ENCODE measurements at regions of chr3 and their contacts with region 1.

Region 1: GRCh38 chr3:138915503-138916498 is 31.1 kb downstream of the FOXL2 start:
- DNase-seq: peak; percentile 91
- H3K4me3 Mint-ChIP-seq: peak overlapping the region; percentile 85
- H3K27ac Mint-ChIP-seq: peak overlapping the region; percentile 76
- H3K4me1 Mint-ChIP-seq: peaks cover 6% of the 10 kb centered on the region
- H3K27me3 Mint-ChIP-seq: no peaks in the 10 kb centered on the region
- CTCF ChIP-seq: peak; percentile 94

Region 2: DNA sequence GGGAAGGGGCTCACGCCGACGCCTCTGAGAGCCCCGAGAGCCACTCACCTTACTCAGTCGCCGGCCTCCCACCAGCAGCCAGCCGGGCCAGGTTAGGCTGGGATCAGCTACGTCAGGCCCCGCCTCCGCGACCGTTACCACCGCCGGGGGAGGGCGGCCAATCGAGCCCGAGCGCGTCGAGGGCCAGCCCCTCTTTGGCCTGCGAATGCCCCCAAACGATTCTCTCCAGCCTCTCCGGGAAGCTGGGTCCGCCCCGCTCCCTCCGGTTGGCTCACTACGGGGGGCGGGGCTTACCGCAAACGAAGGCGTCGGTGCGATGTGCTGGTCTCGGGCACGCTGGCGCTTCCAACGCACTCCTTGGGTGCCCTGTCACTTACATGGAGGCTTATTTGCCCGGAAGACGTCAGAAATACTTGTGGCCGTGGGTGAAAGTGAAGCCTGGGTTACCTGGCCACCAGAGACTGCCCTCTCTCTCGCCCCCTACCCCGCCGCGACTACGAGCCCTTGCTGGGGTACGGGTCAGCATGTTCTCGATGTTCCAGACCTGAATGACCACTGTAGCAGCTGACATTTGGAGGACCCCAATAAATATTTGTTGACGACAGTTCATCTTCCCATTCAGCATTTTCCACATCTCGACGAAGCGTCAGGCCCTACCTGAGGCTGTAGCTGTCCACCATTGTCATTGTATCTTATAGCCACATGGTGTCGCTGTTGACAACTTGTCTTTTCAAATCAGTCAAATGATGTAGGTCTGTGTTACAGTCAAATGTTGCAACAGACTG is 321.5 kb before region 1 on chr3 and contains the start of gene CEP70:
- CTCF ChIA-PET with region 1: interaction called, 364 read pairs
- POLR2A ChIA-PET with region 1: interaction called, 62 read pairs
- intact Hi-C with region 1: loop called (anchors 1 kb)
- DNase-seq: peak; percentile 96
- H3K4me3 Mint-ChIP-seq: peak within 1 kb of the TSS; percentile 81
- H3K27ac Mint-ChIP-seq: peak within 1 kb of the TSS; percentile 69
- H3K4me1 Mint-ChIP-seq: no peaks in the 10 kb centered on the region
- H3K27me3 Mint-ChIP-seq: no peaks in the 10 kb centered on the region
- CTCF ChIP-seq: peak; percentile 81
- total RNA-seq, gene CEP70: 21.3 and 25.9 TPM in 2 replicates

Region 3: DNA sequence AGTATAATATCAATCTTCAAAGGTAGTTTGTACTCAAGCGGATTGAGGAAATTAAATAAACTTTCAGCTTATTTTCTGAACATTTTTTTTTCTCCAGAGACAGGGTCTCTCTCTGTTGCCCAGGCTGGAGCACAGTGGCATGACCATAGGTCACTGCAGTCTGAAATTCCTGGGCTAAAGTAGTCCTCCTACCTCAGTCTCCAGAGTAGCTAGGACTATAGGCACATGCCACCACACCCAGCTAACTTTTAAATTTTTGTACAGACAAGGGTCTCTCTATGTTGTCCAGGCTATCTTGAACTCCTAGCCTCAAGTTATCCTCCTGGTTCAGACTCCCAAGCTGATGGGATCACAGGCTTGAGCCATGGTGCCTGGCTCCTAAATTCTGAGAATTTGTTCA is 210.1 kb before region 1 on chr3:
- CTCF ChIA-PET with region 1: interaction called, 78 read pairs
- POLR2A ChIA-PET with region 1: interaction called, 3 read pairs
- intact Hi-C with region 1: no loop called
- DNase-seq: no peak
- H3K4me3 Mint-ChIP-seq: no peak overlapping the region
- H3K27ac Mint-ChIP-seq: no peak overlapping the region
- H3K4me1 Mint-ChIP-seq: no peaks in the 10 kb centered on the region
- H3K27me3 Mint-ChIP-seq: no peaks in the 10 kb centered on the region
- CTCF ChIP-seq: no peak

Region 4: DNA sequence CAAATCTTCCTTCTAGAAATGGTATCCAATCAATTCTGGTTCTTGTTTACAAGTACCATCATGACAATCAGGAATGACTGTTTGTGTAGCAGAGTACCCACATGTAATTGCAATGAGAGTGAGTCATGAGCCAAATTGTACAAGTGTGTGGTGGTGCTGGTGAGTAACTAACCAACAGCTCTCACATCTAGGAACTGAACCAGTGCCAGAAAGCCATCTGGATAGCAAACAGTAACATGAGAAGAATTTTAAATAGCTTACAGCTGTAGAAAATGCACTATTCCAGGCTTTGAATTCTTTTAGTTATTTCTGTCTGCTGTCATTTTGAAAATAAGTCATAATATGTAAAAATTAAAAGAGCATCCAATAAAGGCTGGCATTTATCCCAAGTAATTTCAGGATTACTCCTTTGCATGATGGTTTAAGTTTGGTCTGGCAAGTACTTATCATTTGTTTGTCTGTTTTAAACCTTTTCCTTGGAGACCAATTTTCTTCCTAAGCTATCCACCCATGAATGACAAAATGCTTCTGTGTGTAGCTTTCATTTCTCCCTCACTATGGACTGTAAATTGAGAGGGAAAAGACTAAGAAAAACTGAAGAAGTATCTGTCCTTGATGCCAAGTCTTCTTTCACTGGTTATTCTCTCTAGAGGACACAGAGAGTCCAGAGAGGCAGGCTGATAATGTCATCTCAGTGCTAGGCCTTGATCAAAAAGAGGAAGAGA is 141.1 kb before region 1 on chr3:
- CTCF ChIA-PET with region 1: interaction called, 38 read pairs
- POLR2A ChIA-PET with region 1: interaction called, 6 read pairs
- intact Hi-C with region 1: loop called (anchors 10 kb)
- DNase-seq: peak; percentile 98
- H3K4me3 Mint-ChIP-seq: no peak overlapping the region
- H3K27ac Mint-ChIP-seq: peak overlapping the region; percentile 96
- H3K4me1 Mint-ChIP-seq: peaks cover 18% of the 10 kb centered on the region
- H3K27me3 Mint-ChIP-seq: no peaks in the 10 kb centered on the region
- CTCF ChIP-seq: no peak

Region 5: DNA sequence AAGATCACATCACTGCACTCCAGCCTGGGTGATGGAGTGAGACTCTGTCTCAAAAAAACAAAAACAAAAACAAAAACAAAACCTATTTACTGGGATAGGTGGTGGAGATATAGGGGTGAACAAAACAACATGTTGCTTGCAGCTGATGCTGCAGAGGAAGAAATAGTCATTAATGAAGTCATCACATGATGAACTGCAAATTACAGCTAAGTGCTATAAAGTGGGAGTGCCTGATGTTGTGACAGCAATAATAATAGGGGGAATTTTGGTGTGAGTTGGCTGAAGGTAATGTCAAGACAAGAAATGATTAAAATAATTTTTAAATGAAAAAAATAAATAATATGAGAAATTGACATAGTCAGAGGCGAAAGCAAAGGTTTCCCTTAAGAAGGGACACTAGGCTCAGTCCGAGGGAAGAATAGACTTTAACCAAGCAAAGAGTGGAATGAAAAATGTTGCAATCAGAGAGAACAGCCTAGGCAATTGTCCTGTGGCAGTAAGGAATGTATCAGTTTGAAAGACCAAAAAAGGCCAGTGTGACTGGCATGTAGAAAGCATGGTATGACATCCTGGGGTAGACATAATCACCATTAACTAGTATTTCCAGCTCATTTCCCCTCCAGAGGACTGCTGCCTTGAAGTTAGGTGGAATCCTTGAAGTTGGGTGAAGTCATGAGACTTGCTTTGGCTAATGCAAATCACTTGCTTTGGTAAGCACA is 66.4 kb before region 1 on chr3:
- CTCF ChIA-PET with region 1: interaction called, 10 read pairs
- POLR2A ChIA-PET with region 1: no interaction called
- intact Hi-C with region 1: no loop called
- DNase-seq: no peak
- H3K4me3 Mint-ChIP-seq: no peak overlapping the region
- H3K27ac Mint-ChIP-seq: no peak overlapping the region
- H3K4me1 Mint-ChIP-seq: no peaks in the 10 kb centered on the region
- H3K27me3 Mint-ChIP-seq: no peaks in the 10 kb centered on the region
- CTCF ChIP-seq: no peak